ENCODE measurements at regions of chr6 and their contacts with region 1.

Region 1: DNA sequence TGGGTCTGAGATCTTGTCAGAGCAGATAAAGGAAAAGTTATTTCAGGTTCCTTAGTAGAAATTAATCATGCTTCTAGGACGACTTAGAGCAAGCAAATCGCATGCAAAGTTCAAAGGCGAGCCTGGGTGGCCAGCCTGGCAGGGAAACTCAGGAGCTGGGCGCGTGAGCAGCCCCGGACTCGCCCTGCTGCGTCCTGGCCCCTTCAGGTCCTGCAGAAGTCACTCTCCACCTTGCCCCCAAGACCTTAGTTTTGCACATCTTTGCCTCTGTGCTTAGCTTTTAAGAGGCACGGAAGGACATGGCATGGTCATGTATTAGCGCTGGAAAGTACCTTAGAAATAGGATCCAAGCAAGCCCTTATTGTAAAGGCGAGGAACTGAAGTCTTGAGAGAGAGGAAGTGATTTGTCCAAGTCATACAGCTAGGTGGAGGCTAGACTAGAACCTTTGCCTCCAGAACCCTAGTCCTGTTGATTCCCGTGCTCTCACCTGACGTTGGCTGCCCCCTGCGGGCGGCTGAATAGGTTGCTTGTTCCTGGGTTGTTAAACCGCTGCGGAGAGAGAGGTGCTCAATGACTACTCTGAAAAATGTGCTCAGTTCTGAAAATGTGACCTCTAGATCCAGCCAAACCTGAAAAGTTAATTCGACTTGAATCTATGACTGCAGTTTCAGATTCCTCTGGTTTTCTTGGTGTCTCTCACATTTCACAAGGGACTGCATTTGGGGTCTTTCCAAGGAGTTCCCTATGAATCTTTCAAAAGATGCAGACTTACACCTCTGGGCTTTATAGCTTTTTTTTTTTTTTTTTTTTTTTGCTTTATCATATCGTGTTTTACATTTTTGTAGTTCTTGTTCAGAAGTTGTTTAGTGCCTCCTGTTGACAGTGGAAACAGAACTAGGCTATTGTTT is 2.7 kb downstream of the MYB start:
- DNase-seq: peak; percentile 57 to 81 (median 76)
- ATAC-seq: peak; percentile 68
- H3K4me3 ChIP-seq: peak overlapping the region; percentile 56
- H3K4me3 Mint-ChIP-seq: peak overlapping the region; percentile 85 to 98 (median 90)
- H3K27ac ChIP-seq: peak overlapping the region; percentile 74
- H3K27ac Mint-ChIP-seq: peak overlapping the region; percentile 38 to 96 (median 86)
- H3K4me1 ChIP-seq: peaks cover 0 to 4% of the 10 kb centered on the region in 2 donors
- H3K4me1 Mint-ChIP-seq: peaks cover 16 to 42% (median 22%) of the 10 kb centered on the region in 7 donors
- H3K27me3 ChIP-seq: no peaks in the 10 kb centered on the region
- H3K27me3 Mint-ChIP-seq: no peaks in the 10 kb centered on the region

Region 2: GRCh38 chr6:133952815-133953633 is 1230.8 kb before region 1 on chr6 and contains the start of gene TBPL1:
- CTCF ChIA-PET with region 1: no interaction called
- POLR2A ChIA-PET with region 1: no interaction called
- intact Hi-C with region 1: loop called in 1 of 2 experiments (anchors 5 kb)
- DNase-seq: peak; percentile 60 to 81 (median 78)
- ATAC-seq: peak; percentile 95
- H3K4me3 ChIP-seq: peak within 1 kb of the TSS; percentile 85
- H3K4me3 Mint-ChIP-seq: peak within 1 kb of the TSS; percentile 96 to 100 (median 98)
- H3K27ac ChIP-seq: peak within 1 kb of the TSS; percentile 81
- H3K27ac Mint-ChIP-seq: peak within 1 kb of the TSS; percentile 83 to 99 (median 95)
- H3K4me1 ChIP-seq: peaks cover 10 to 25% of the 10 kb centered on the region in 2 donors
- H3K4me1 Mint-ChIP-seq: peaks cover 32 to 53% (median 45%) of the 10 kb centered on the region in 7 donors
- H3K27me3 ChIP-seq: no peaks in the 10 kb centered on the region
- H3K27me3 Mint-ChIP-seq: peaks cover 0 to 10% (median 0%) of the 10 kb centered on the region in 5 donors
- total RNA-seq, gene TBPL1: 21.0 to 34.7 (median 25.4) TPM

Region 3: DNA sequence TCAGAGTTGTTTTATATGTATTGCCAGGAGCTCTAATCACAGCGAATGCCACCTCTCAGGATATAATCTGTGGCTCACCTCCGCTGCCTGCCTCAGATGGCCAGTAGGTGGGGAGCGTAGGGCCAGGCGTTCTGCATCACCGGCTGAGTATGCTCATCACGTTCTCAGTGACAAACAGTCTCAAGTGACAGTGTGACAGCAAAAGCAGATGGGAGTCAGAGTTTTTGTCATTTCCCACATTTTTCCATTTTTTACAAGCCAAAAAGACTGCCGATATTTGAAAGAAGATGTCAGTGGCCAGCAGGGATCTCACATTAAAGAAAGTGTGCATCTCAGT is 442.6 kb before region 1 on chr6:
- CTCF ChIA-PET with region 1: no interaction called
- POLR2A ChIA-PET with region 1: no interaction called
- intact Hi-C with region 1: no loop called
- DNase-seq: no peak
- ATAC-seq: no peak
- H3K4me3 ChIP-seq: no peak overlapping the region
- H3K4me3 Mint-ChIP-seq: no peak overlapping the region
- H3K27ac ChIP-seq: no peak overlapping the region
- H3K27ac Mint-ChIP-seq: peak overlapping the region in 1 of 9 donors; percentile 2
- H3K4me1 ChIP-seq: no peaks in the 10 kb centered on the region
- H3K4me1 Mint-ChIP-seq: no peaks in the 10 kb centered on the region
- H3K27me3 ChIP-seq: no peaks in the 10 kb centered on the region
- H3K27me3 Mint-ChIP-seq: peaks cover 0 to 53% (median 14%) of the 10 kb centered on the region in 5 donors

Region 4: GRCh38 chr6:135014353-135014832 is 169.4 kb before region 1 on chr6:
- CTCF ChIA-PET with region 1: interaction called, 4 read pairs
- POLR2A ChIA-PET with region 1: no interaction called
- intact Hi-C with region 1: loop called in 1 of 2 experiments (anchors 1 kb)
- DNase-seq: peak in 7 of 9 donors; percentile 25 to 66 (median 52)
- ATAC-seq: peak; percentile 89
- H3K4me3 ChIP-seq: peak overlapping the region; percentile 8
- H3K4me3 Mint-ChIP-seq: peak overlapping the region; percentile 3 to 83 (median 71)
- H3K27ac ChIP-seq: peak overlapping the region; percentile 62
- H3K27ac Mint-ChIP-seq: peak overlapping the region; percentile 76 to 94 (median 85)
- H3K4me1 ChIP-seq: peaks cover 18 to 51% of the 10 kb centered on the region in 2 donors
- H3K4me1 Mint-ChIP-seq: peaks cover 43 to 85% (median 81%) of the 10 kb centered on the region in 7 donors
- H3K27me3 ChIP-seq: no peaks in the 10 kb centered on the region
- H3K27me3 Mint-ChIP-seq: no peaks in the 10 kb centered on the region

Region 5: GRCh38 chr6:135088818-135089809 is 94.7 kb before region 1 on chr6:
- CTCF ChIA-PET with region 1: interaction called, 8 read pairs
- POLR2A ChIA-PET with region 1: interaction called, 8 read pairs
- intact Hi-C with region 1: loop called (anchors 1 kb)
- DNase-seq: peak in 4 of 9 donors; percentile 24 to 52 (median 36)
- ATAC-seq: peak; percentile 73
- H3K4me3 ChIP-seq: peak overlapping the region; percentile 50
- H3K4me3 Mint-ChIP-seq: peak overlapping the region; percentile 50 to 86 (median 66)
- H3K27ac ChIP-seq: peak overlapping the region; percentile 69
- H3K27ac Mint-ChIP-seq: peak overlapping the region; percentile 72 to 98 (median 95)
- H3K4me1 ChIP-seq: peaks cover 29 to 63% of the 10 kb centered on the region in 2 donors
- H3K4me1 Mint-ChIP-seq: peaks cover 43 to 98% (median 94%) of the 10 kb centered on the region in 7 donors
- H3K27me3 ChIP-seq: no peaks in the 10 kb centered on the region
- H3K27me3 Mint-ChIP-seq: no peaks in the 10 kb centered on the region

Region 6: DNA sequence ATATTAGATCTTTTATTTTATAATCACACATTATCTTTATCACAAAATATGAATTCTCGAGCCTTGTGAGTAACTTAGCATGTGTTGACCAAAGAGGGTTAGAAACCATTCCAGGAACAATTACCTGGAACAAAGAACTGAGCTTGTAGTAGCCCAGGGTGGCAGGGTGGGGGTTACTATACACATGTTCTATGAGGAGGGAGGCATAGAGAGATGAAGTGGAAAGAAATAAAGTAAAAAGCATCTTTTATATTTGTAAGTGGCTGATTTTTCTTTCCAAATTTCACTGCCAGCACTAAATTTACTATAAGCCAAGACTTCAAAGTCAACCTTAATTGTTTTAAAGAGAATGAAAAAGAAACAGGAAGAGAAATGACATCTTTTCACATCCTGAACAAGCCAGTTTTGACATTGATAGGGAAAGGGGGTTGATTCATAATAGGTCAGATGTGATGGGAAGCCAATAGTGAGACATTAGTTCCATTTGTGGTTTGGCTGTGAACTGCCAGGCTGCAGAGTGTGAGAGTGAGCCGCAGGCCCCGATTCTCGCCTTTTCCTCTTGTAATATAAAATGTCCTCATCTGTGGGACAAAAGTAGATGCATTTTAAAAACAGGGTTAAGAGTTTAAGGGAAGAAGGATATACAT is 55.4 kb before region 1 on chr6:
- CTCF ChIA-PET with region 1: interaction called, 4 read pairs
- POLR2A ChIA-PET with region 1: interaction called, 3 read pairs
- intact Hi-C with region 1: loop called in 1 of 2 experiments (anchors 5 kb)
- DNase-seq: peak in 8 of 9 donors; percentile 53 to 73 (median 66)
- ATAC-seq: peak; percentile 92
- H3K4me3 ChIP-seq: peak overlapping the region; percentile 36
- H3K4me3 Mint-ChIP-seq: peak overlapping the region; percentile 46 to 93 (median 77)
- H3K27ac ChIP-seq: peak overlapping the region; percentile 75
- H3K27ac Mint-ChIP-seq: peak overlapping the region; percentile 95 to 98 (median 97)
- H3K4me1 ChIP-seq: peaks cover 18 to 22% of the 10 kb centered on the region in 2 donors
- H3K4me1 Mint-ChIP-seq: peaks cover 26 to 64% (median 55%) of the 10 kb centered on the region in 7 donors
- H3K27me3 ChIP-seq: no peaks in the 10 kb centered on the region
- H3K27me3 Mint-ChIP-seq: no peaks in the 10 kb centered on the region

Region 7: GRCh38 chr6:135212020-135212806 is 28.4 kb after region 1 on chr6:
- CTCF ChIA-PET with region 1: interaction called, 4 read pairs
- POLR2A ChIA-PET with region 1: interaction called, 5 read pairs
- intact Hi-C with region 1: loop called (anchors 1 to 2 kb)
- DNase-seq: no peak
- ATAC-seq: no peak
- H3K4me3 ChIP-seq: peak overlapping the region; percentile 2
- H3K4me3 Mint-ChIP-seq: peak overlapping the region; percentile 5 to 82 (median 66)
- H3K27ac ChIP-seq: no peak overlapping the region
- H3K27ac Mint-ChIP-seq: peak overlapping the region; percentile 9 to 88 (median 69)
- H3K4me1 ChIP-seq: peaks cover 0 to 26% of the 10 kb centered on the region in 2 donors
- H3K4me1 Mint-ChIP-seq: peaks cover 20 to 48% (median 41%) of the 10 kb centered on the region in 7 donors
- H3K27me3 ChIP-seq: no peaks in the 10 kb centered on the region
- H3K27me3 Mint-ChIP-seq: no peaks in the 10 kb centered on the region

Region 8: DNA sequence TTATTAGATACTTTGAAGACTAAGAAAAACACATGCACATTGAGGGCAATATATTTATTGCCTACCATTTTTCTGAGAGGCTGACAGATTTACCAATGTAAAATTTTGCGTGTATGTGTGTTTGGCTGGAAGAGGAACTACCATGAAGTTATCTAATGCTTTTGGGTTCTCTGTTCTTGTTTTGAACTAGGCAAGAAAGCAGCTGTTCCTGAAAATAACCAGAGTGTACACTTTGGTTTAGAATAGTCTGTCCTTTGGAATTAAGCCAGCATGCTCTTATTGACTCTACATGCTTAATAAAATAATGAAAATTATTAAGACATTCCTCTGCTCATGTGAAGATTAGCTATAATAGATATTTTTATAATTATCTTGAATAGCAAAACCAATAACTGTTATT is 126.5 kb after region 1 on chr6:
- CTCF ChIA-PET with region 1: no interaction called
- POLR2A ChIA-PET with region 1: no interaction called
- intact Hi-C with region 1: no loop called
- DNase-seq: no peak
- ATAC-seq: no peak
- H3K4me3 ChIP-seq: no peak overlapping the region
- H3K4me3 Mint-ChIP-seq: no peak overlapping the region
- H3K27ac ChIP-seq: no peak overlapping the region
- H3K27ac Mint-ChIP-seq: no peak overlapping the region
- H3K4me1 ChIP-seq: no peaks in the 10 kb centered on the region
- H3K4me1 Mint-ChIP-seq: peaks cover 0 to 5% (median 0%) of the 10 kb centered on the region in 7 donors
- H3K27me3 ChIP-seq: no peaks in the 10 kb centered on the region
- H3K27me3 Mint-ChIP-seq: no peaks in the 10 kb centered on the region

Region 9: GRCh38 chr6:136289579-136290409 is 1106.0 kb after region 1 on chr6 and contains the start of gene BCLAF1:
- CTCF ChIA-PET with region 1: no interaction called
- POLR2A ChIA-PET with region 1: interaction called, 6 read pairs
- intact Hi-C with region 1: loop called (anchors 2 kb)
- DNase-seq: peak; percentile 98 to 100 (median 100)
- ATAC-seq: peak; percentile 84
- H3K4me3 ChIP-seq: peak within 1 kb of the TSS; percentile 93
- H3K4me3 Mint-ChIP-seq: peak within 1 kb of the TSS; percentile 94 to 100 (median 98)
- H3K27ac ChIP-seq: peak within 1 kb of the TSS; percentile 99
- H3K27ac Mint-ChIP-seq: peak within 1 kb of the TSS; percentile 99 to 100 (median 100)
- H3K4me1 ChIP-seq: peaks cover 35 to 36% of the 10 kb centered on the region in 2 donors
- H3K4me1 Mint-ChIP-seq: peaks cover 19 to 74% (median 58%) of the 10 kb centered on the region in 7 donors
- H3K27me3 ChIP-seq: no peaks in the 10 kb centered on the region
- H3K27me3 Mint-ChIP-seq: peaks cover 0 to 2% (median 0%) of the 10 kb centered on the region in 5 donors
- total RNA-seq, gene BCLAF1: 202 to 439 (median 262) TPM

Measured in naive thymus-derived CD4-positive, alpha-beta T cell (primary cell).